Dendritic cell treated with granulocyte-macrophage colony-stimulating factor and Interleukin-4, amounts not matched to agents 40 ng/mL and 50 ng/mL, for 4 days (primary cell): ENCODE measurements at regions of chr1 and their contacts with region 1.

Region 1: DNA sequence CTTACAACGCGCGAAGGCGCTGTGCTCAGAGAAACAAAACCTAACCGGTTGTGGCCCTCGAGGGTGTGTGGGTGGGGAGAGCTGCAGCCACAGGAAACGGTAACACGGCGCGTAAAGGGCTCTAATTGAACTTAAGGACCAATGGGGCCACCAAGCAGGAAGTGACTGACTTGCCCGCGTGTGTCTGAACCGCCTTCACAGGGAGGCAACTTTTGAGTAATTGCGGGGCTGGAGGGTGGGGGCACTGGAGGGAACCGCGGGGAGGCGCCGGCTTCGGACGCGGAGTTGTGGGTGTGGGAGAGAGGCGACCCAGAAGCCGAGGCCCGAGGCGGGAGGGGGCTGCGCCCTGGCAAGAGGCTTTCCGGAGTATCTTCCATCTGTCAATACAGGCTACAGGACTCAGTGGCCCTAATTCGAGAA is 577 bp upstream of the PNRC2 start:
- H3K4me3 Mint-ChIP-seq: peak overlapping the region; percentile 98
- H3K27ac Mint-ChIP-seq: peak overlapping the region; percentile 99
- H3K4me1 Mint-ChIP-seq: peaks cover 43% of the 10 kb centered on the region
- H3K27me3 Mint-ChIP-seq: no peaks in the 10 kb centered on the region

Region 2: DNA sequence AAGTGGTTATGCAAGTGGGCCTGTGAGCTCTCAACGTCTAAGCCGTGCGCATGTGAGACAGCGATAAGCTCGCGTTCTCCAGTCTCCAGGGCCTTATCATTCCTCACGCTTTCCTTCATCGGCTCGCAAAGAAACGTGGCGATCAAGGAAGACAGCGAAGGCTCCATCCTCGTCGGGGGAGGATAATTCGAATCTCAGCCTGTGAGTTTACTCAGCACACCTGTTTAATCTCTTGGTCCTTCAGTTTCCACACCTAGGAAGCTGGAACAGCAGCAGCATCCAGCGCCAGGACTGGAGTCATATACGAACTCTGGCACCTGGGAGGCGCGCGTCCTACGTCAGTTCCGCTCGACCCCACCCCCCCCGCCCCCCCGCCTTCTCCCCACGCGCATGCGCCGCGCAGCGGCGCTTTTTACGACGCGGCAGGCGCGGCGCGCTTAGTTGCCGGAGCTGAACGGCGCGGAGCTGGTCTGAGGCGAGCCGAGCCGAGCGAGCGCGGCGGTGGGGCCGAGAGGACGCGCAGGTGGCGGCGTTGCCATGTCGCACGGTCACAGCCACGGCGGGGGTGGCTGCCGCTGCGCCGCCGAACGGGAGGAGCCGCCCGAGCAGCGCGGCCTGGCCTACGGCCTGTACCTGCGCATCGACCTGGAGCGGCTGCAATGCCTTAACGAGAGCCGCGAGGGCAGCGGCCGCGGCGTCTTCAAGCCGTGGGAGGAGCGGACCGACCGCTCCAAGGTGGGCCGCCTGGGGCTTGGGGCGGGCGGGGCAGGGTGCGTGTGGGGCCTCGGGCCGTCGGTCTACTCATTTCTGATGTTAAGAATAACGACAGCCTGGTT is 180.9 kb before region 1 on chr1 and contains the start of gene PITHD1:
- intact Hi-C with region 1: no loop called
- H3K4me3 Mint-ChIP-seq: peak within 1 kb of the TSS; percentile 79
- H3K27ac Mint-ChIP-seq: peak within 1 kb of the TSS; percentile 83
- H3K4me1 Mint-ChIP-seq: peaks cover 13% of the 10 kb centered on the region
- H3K27me3 Mint-ChIP-seq: no peaks in the 10 kb centered on the region

Region 3: DNA sequence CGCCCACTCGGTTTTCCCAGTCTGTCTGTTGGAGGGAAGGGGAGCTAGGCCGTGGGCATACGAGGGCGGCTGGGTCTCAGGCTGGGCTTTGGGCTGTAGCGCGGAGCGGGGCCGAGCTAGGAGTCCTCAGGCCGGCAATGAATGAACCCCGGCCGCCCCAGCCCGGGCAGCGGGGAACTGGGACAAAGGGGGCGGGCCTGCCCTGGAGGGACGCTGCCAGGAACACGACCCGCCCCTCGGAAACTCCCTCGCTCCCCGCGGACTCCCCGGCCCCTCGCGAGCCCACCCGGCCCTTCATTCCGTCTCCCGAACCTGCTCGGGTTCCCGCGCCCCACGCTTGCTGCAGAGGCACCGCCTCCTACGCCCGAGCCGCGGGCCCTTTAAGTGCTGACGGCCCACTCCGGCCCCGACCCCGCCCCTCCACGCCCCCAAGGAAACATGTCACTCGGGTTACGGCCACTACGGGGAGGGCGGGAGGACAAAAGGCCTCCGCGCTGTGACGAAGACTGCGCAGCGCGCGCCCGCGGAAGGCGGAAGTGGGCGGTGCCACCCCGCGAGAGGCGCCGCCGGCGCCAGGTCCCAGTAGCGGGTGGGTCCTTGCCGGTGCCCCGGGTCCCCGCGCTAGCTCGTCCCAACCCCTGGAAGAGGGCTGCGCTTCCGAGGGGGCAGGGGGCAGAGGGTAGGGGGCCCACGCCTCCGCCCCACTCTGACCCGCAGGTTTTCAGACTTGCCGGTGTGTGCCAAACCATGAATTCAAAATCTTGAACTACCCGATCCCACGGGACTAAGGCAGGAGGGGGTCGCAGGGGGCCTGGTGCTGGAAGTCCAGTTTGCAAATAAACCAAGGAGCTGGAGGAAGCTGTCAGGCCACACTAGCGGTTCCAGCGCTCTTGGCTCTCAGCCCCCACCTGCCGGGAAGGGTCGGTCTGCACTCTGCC is 158.4 kb before region 1 on chr1 and contains the start of gene GALE:
- intact Hi-C with region 1: loop called (anchors 10 kb)
- H3K4me3 Mint-ChIP-seq: peak within 1 kb of the TSS; percentile 87
- H3K27ac Mint-ChIP-seq: peak within 1 kb of the TSS; percentile 92
- H3K4me1 Mint-ChIP-seq: peaks cover 63% of the 10 kb centered on the region
- H3K27me3 Mint-ChIP-seq: no peaks in the 10 kb centered on the region

Region 4: GRCh38 chr1:23979878-23980724 is 21.1 kb after region 1 on chr1 and contains the start of gene SRSF10:
- intact Hi-C with region 1: loop called (anchors 1 kb)
- H3K4me3 Mint-ChIP-seq: peak within 1 kb of the TSS; percentile 98
- H3K27ac Mint-ChIP-seq: peak within 1 kb of the TSS; percentile 96
- H3K4me1 Mint-ChIP-seq: peaks cover 46% of the 10 kb centered on the region
- H3K27me3 Mint-ChIP-seq: no peaks in the 10 kb centered on the region

Region 5: DNA sequence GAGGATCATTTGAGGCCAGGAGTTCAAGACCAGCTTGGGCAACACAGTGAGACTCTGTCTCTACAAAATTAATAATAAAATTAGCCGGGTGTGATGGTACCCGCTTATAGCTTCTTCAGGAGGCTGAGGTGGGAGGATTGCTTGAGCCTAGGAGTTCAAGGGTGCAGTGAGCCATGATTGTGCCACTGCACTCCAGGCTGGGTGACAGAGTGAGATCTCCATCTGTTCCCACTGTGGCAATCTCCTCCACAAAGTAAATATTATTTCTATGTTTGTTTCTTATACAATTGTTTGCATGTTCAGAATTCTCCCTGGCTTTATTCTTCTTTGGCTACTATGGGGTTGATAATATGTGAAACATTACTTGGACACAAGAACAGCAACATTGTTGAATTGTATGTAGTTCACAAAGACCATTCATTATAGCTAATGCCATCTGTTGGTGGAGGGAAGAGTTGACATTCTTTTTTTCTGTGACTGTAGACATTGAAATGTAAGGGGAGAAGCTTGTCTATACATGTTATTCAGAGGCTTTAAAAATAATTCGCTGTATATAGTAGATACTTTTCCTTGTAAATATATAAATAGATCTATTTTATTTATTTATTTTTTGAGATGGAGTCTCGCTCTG is 68.9 kb after region 1 on chr1:
- intact Hi-C with region 1: loop called (anchors 5 kb)
- H3K4me3 Mint-ChIP-seq: no peak overlapping the region
- H3K27ac Mint-ChIP-seq: no peak overlapping the region
- H3K4me1 Mint-ChIP-seq: peaks cover 8% of the 10 kb centered on the region
- H3K27me3 Mint-ChIP-seq: no peaks in the 10 kb centered on the region

Region 6: GRCh38 chr1:25140073-25140797 is 1181.2 kb after region 1 on chr1:
- intact Hi-C with region 1: no loop called
- H3K4me3 Mint-ChIP-seq: no peak overlapping the region
- H3K27ac Mint-ChIP-seq: no peak overlapping the region
- H3K4me1 Mint-ChIP-seq: peaks cover 21% of the 10 kb centered on the region
- H3K27me3 Mint-ChIP-seq: peaks cover 5% of the 10 kb centered on the region